T-cell (primary cell): ENCODE measurements at regions of chr17 and their contacts with region 1.

Region 1: GRCh38 chr17:8954339-8954738 is 11.2 kb downstream of the PIK3R5 start:
- DNase-seq: peak; percentile 49 to 93 (median 82)
- ATAC-seq: peak; percentile 97 to 99 (median 98)
- H3K4me3 ChIP-seq: peak overlapping the region; percentile 5 to 40
- H3K4me3 Mint-ChIP-seq: peak overlapping the region; percentile 73 to 79 (median 78)
- H3K27ac ChIP-seq: peak overlapping the region; percentile 86
- H3K27ac Mint-ChIP-seq: peak overlapping the region; percentile 97 to 98
- H3K4me1 ChIP-seq: peaks cover 64 to 75% of the 10 kb centered on the region in 2 experiments
- H3K4me1 Mint-ChIP-seq: peaks cover 96 to 99% (median 99%) of the 10 kb centered on the region in 3 donors
- H3K27me3 ChIP-seq: no peaks in the 10 kb centered on the region
- H3K27me3 Mint-ChIP-seq: no peaks in the 10 kb centered on the region

Region 2: DNA sequence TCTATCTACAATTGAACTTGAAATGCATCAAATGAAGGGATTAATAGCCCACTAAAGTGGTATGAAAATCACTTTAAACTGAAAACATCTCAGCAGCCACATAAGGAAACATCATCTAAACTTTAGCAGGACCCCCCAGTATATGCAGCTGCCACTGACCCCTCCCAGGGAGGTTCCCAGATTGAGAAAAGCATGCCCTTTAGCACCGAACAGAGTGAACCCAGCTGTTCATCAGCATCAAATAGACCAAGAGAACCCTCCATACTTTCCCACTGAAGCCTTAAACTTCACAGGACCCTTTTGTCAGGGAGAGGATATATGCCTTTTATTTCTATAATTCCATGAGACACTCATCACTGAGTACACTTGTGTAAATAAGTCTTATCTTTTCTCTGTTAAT is 368.4 kb before region 1 on chr17:
- CTCF ChIA-PET with region 1: no interaction called
- POLR2A ChIA-PET with region 1: no interaction called
- DNase-seq: no peak
- ATAC-seq: no peak
- H3K4me3 ChIP-seq: no peak overlapping the region
- H3K4me3 Mint-ChIP-seq: no peak overlapping the region
- H3K27ac ChIP-seq: no peak overlapping the region
- H3K27ac Mint-ChIP-seq: no peak overlapping the region
- H3K4me1 ChIP-seq: no peaks in the 10 kb centered on the region
- H3K4me1 Mint-ChIP-seq: no peaks in the 10 kb centered on the region
- H3K27me3 ChIP-seq: peaks cover 0 to 3% of the 10 kb centered on the region in 2 experiments
- H3K27me3 Mint-ChIP-seq: peaks cover 0 to 19% of the 10 kb centered on the region in 2 donors

Region 3: GRCh38 chr17:8941520-8941919 is 12.8 kb before region 1 on chr17:
- CTCF ChIA-PET with region 1: interaction called, 4 to 11 read pairs
- POLR2A ChIA-PET with region 1: interaction called, 3 to 5 read pairs
- DNase-seq: peak; percentile 39 to 88 (median 71)
- ATAC-seq: peak; percentile 73 to 81 (median 78)
- H3K4me3 ChIP-seq: peak overlapping the region; percentile 30 to 62
- H3K4me3 Mint-ChIP-seq: peak overlapping the region; percentile 68 to 80 (median 73)
- H3K27ac ChIP-seq: peak overlapping the region; percentile 85
- H3K27ac Mint-ChIP-seq: peak overlapping the region; percentile 99
- H3K4me1 ChIP-seq: peaks cover 51 to 70% of the 10 kb centered on the region in 2 experiments
- H3K4me1 Mint-ChIP-seq: peaks cover 90 to 95% (median 91%) of the 10 kb centered on the region in 3 donors
- H3K27me3 ChIP-seq: no peaks in the 10 kb centered on the region
- H3K27me3 Mint-ChIP-seq: no peaks in the 10 kb centered on the region

Region 4: GRCh38 chr17:9016941-9017552 is 62.7 kb after region 1 on chr17:
- CTCF ChIA-PET with region 1: no interaction called
- POLR2A ChIA-PET with region 1: no interaction called
- DNase-seq: no peak
- ATAC-seq: no peak
- H3K4me3 ChIP-seq: no peak overlapping the region
- H3K4me3 Mint-ChIP-seq: no peak overlapping the region
- H3K27ac ChIP-seq: no peak overlapping the region
- H3K27ac Mint-ChIP-seq: no peak overlapping the region
- H3K4me1 ChIP-seq: peaks cover 0 to 13% of the 10 kb centered on the region in 2 experiments
- H3K4me1 Mint-ChIP-seq: peaks cover 0 to 6% (median 0%) of the 10 kb centered on the region in 3 donors
- H3K27me3 ChIP-seq: peaks cover 0 to 48% of the 10 kb centered on the region in 2 experiments
- H3K27me3 Mint-ChIP-seq: peaks cover 32 to 46% of the 10 kb centered on the region in 2 donors